T-cell (primary cell): ENCODE measurements at regions of chr10 and their contacts with region 1.

Region 1: GRCh38 chr10:22481106-22481505 is 135.8 kb downstream of the SPAG6 start:
- DNase-seq: no peak
- ATAC-seq: no peak
- H3K4me3 ChIP-seq: no peak overlapping the region
- H3K4me3 Mint-ChIP-seq: no peak overlapping the region
- H3K27ac ChIP-seq: no peak overlapping the region
- H3K27ac Mint-ChIP-seq: no peak overlapping the region
- H3K4me1 ChIP-seq: peaks cover 0 to 15% of the 10 kb centered on the region in 2 experiments
- H3K4me1 Mint-ChIP-seq: peaks cover 7 to 23% (median 22%) of the 10 kb centered on the region in 3 donors
- H3K27me3 ChIP-seq: peaks cover 0 to 29% of the 10 kb centered on the region in 2 experiments
- H3K27me3 Mint-ChIP-seq: peaks cover 19 to 22% of the 10 kb centered on the region in 2 donors

Region 2: DNA sequence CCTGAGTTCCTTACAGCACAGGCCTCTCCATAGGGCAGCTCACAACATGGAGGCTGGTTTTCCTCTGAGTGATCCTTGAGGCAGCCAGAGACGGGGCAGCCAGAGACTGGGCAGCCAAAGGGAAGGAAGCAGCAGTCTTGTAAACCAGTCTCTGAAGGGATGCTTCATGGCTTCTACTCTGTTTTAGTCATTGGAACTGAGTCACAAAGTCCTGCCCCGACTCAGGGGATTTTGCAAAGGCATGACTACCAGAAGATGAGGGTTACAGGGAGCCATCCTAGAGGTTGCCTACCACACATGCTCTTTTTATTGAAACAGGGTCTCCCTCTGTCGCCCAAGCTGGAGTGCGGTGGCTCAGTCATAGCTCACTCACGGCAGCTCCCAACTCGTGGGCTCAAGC is 209.3 kb before region 1 on chr10:
- CTCF ChIA-PET with region 1: no interaction called
- POLR2A ChIA-PET with region 1: no interaction called
- DNase-seq: no peak
- ATAC-seq: no peak
- H3K4me3 ChIP-seq: no peak overlapping the region
- H3K4me3 Mint-ChIP-seq: no peak overlapping the region
- H3K27ac ChIP-seq: no peak overlapping the region
- H3K27ac Mint-ChIP-seq: no peak overlapping the region
- H3K4me1 ChIP-seq: no peaks in the 10 kb centered on the region
- H3K4me1 Mint-ChIP-seq: no peaks in the 10 kb centered on the region
- H3K27me3 ChIP-seq: peaks cover 0 to 21% of the 10 kb centered on the region in 2 experiments
- H3K27me3 Mint-ChIP-seq: peaks cover 6 to 15% of the 10 kb centered on the region in 2 donors

Region 3: GRCh38 chr10:23556727-23557440 is 1075.8 kb after region 1 on chr10:
- CTCF ChIA-PET with region 1: no interaction called
- POLR2A ChIA-PET with region 1: no interaction called
- DNase-seq: no peak
- ATAC-seq: no peak
- H3K4me3 ChIP-seq: no peak overlapping the region
- H3K4me3 Mint-ChIP-seq: no peak overlapping the region
- H3K27ac ChIP-seq: no peak overlapping the region
- H3K27ac Mint-ChIP-seq: no peak overlapping the region
- H3K4me1 ChIP-seq: no peaks in the 10 kb centered on the region
- H3K4me1 Mint-ChIP-seq: peaks cover 0 to 30% (median 0%) of the 10 kb centered on the region in 3 donors
- H3K27me3 ChIP-seq: peaks cover 0 to 2% of the 10 kb centered on the region in 2 experiments
- H3K27me3 Mint-ChIP-seq: peaks cover 0 to 2% of the 10 kb centered on the region in 2 donors

Region 4: DNA sequence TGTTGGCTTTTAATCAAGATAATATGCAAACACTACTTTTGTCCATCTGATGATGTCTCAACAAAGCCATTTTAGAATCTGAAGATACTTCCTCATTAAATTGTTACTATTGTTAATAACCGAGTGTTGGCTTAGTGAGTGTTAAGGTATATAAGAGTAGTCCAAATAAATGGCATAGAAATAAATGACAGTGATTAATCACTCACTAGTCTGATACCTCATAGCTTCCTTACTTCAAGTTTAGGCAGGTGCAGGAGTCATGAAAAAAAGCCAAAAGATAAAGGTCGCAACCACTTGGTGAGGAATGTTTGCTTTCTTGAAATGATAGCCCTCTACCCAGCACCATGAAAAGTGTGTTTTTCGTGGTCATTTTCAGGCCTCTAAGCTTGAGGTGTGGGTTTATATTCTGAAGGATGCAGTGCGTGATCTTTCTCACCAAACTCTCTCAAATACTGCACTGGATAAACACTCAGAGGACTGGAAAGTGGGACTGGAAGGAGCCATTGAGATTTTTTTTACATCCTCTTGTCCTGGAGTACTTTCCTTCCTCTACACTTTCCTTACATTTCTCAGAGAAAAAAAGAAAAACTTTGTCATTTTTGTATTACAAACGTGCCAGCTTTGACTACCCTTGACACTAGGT is 1865.9 kb after region 1 on chr10:
- CTCF ChIA-PET with region 1: no interaction called
- POLR2A ChIA-PET with region 1: interaction called in 1 of 2 experiments, 11 read pairs
- DNase-seq: no peak
- ATAC-seq: no peak
- H3K4me3 ChIP-seq: no peak overlapping the region
- H3K4me3 Mint-ChIP-seq: no peak overlapping the region
- H3K27ac ChIP-seq: no peak overlapping the region
- H3K27ac Mint-ChIP-seq: no peak overlapping the region
- H3K4me1 ChIP-seq: no peaks in the 10 kb centered on the region
- H3K4me1 Mint-ChIP-seq: peaks cover 0 to 2% (median 2%) of the 10 kb centered on the region in 3 donors
- H3K27me3 ChIP-seq: no peaks in the 10 kb centered on the region
- H3K27me3 Mint-ChIP-seq: peaks cover 7 to 11% of the 10 kb centered on the region in 2 donors